ENCODE measurements at regions of chr15 and their contacts with region 1.

Region 1: GRCh38 chr15:99928429-99928981 is 195.3 kb upstream of the LYSMD4 start:
- ATAC-seq: peak; percentile 88 to 96 (median 92)
- H3K4me3 ChIP-seq: peak overlapping the region; percentile 35 to 50 (median 45)
- H3K27ac ChIP-seq: no peak overlapping the region
- H3K4me1 ChIP-seq: peaks cover 0 to 5% of the 10 kb centered on the region in 2 donors

Region 2: DNA sequence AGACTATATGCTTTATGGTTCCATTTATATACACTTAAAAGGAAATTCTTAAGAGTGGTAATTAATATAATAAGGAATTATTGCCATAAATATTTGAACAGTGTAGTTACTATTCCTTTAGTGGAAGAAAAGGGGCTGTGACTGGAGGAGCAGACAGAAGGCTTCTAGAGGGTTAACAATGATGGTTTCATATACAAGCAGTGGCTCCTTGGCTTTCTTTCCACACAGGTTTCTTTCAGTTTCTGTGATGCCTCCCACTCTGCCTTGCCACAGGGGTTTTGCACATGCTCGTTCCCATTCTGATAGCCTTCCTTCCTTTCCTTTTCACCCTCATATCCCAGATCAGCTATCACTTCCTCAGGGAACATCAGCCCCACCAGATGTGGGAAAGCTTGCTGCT is 86.4 kb before region 1 on chr15:
- in situ Hi-C with region 1: no loop called
- ATAC-seq: no peak
- H3K4me3 ChIP-seq: no peak overlapping the region
- H3K27ac ChIP-seq: no peak overlapping the region
- H3K4me1 ChIP-seq: no peaks in the 10 kb centered on the region

Region 3: DNA sequence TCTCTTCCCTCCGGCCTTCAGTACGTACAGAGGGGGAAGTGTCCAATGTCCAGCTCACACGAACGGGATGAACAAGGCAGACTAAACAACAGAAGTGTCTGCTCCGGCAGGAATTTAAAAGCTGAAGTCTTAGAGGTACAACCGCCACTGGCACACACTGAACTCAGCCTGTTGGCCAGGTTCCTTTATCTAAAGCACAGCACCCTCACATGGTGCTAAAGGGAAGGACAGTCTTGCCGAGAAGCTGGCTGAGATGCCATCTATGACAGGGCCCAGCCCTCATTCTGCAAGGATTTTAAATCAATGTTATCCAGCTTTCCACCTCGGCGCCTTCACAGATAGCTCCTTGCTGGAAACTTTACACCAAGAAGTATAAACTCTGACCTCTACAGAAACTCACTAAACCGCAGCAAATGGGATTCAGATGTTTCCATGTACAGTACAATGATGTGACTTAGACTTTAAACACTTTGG is 410.5 kb after region 1 on chr15:
- in situ Hi-C with region 1: loop called in 3 of 9 experiments (anchors 10 to 25 kb)
- ATAC-seq: peak in 6 of 8 experiments; percentile 11 to 69 (median 31)
- H3K4me3 ChIP-seq: no peak overlapping the region
- H3K27ac ChIP-seq: no peak overlapping the region
- H3K4me1 ChIP-seq: no peaks in the 10 kb centered on the region

Measured in motor neuron (in vitro differentiated cells).